ENCODE measurements at regions of chr3 and their contacts with region 1.

Region 1: GRCh38 chr3:115804722-115805121 is 181.4 kb downstream of the GAP43 start:
- DNase-seq: peak; percentile 88
- H3K4me3 Mint-ChIP-seq: no peak overlapping the region
- H3K27ac Mint-ChIP-seq: peak overlapping the region; percentile 75
- H3K4me1 Mint-ChIP-seq: peaks cover 22% of the 10 kb centered on the region
- H3K27me3 Mint-ChIP-seq: no peaks in the 10 kb centered on the region
- CTCF ChIP-seq: no peak

Region 2: GRCh38 chr3:115512565-115513415 is 291.9 kb before region 1 on chr3:
- CTCF ChIA-PET with region 1: no interaction called
- POLR2A ChIA-PET with region 1: no interaction called
- intact Hi-C with region 1: no loop called
- DNase-seq: peak; percentile 21
- H3K4me3 Mint-ChIP-seq: peak overlapping the region; percentile 74
- H3K27ac Mint-ChIP-seq: peak overlapping the region; percentile 10
- H3K4me1 Mint-ChIP-seq: peaks cover 16% of the 10 kb centered on the region
- H3K27me3 Mint-ChIP-seq: peaks cover 26% of the 10 kb centered on the region
- CTCF ChIP-seq: no peak

Region 3: DNA sequence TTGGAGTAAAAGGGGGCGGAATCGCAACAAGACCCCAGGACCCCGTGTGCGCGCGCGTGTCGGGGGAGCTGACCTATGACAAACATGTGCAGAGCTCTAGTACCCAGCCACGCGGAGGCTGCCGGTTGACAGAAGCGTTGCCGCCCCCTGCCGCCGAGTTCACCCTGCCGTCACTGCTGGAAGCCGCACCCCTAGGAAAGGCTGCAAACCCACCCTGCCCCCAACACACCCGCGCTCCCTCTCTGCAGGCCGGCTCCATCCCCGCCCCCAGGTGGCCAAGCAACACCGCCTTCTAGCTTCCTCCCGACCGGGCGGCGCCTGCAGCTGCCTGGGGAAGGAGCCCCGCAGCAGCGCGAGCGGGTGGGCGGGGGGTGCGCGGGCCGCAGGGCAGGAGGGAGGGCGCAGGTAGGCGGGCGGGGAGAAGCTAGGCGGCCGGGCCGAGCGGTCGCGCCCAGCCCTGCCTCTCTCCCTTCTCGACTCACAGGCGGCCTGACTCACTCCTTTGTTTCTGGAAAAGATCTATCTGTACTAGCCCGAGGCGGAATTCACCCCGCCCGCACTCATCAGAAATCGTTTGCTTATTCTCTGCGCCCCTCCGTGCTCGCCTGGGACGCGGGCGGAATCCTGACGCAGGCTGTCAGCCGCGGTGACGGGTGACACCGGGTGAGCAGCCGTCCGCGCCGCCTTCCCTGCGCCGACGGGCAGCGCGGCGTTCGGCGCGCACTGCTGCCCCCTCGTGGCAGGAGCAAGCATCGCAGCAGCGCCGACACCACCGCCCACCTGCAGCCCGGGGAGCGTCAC is 20.6 kb before region 1 on chr3:
- CTCF ChIA-PET with region 1: interaction called, 36 read pairs
- POLR2A ChIA-PET with region 1: interaction called, 18 read pairs
- intact Hi-C with region 1: loop called (anchors 1 kb)
- DNase-seq: peak; percentile 86
- H3K4me3 Mint-ChIP-seq: peak overlapping the region; percentile 81
- H3K27ac Mint-ChIP-seq: peak overlapping the region; percentile 90
- H3K4me1 Mint-ChIP-seq: peaks cover 25% of the 10 kb centered on the region
- H3K27me3 Mint-ChIP-seq: no peaks in the 10 kb centered on the region
- CTCF ChIP-seq: peak; percentile 94

Region 4: GRCh38 chr3:115790759-115791158 is 14.0 kb before region 1 on chr3:
- CTCF ChIA-PET with region 1: interaction called, 36 read pairs
- POLR2A ChIA-PET with region 1: interaction called, 12 read pairs
- intact Hi-C with region 1: loop called (anchors 1 kb)
- DNase-seq: peak; percentile 96
- H3K4me3 Mint-ChIP-seq: no peak overlapping the region
- H3K27ac Mint-ChIP-seq: peak overlapping the region; percentile 80
- H3K4me1 Mint-ChIP-seq: peaks cover 46% of the 10 kb centered on the region
- H3K27me3 Mint-ChIP-seq: no peaks in the 10 kb centered on the region
- CTCF ChIP-seq: no peak

Measured in MCF 10A (cell line).